ENCODE measurements at regions of chr1 and their contacts with region 1.

Region 1: DNA sequence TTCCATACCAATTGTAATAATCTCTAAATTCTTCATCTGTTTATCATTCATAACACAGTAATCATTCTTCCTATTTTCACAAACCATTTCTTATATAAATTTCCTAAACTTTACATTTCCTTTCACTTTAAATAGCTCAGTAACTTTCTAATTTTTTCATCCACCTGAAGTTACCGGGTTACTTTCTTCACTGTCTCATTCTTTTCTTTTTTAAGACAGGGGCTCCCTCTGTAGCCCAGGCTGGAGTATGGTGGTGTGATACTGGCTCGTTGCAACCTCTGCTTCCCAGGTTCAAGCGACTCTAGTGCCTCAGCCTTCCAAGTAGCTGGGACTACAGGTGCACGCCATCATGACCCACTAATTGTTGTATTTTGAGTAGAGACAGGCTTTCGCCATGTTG is 41.3 kb downstream of the RERE start:
- DNase-seq: no peak
- H3K4me3 ChIP-seq: no peak overlapping the region
- H3K27me3 ChIP-seq: no peaks in the 10 kb centered on the region
- CTCF ChIP-seq: no peak

Region 2: DNA sequence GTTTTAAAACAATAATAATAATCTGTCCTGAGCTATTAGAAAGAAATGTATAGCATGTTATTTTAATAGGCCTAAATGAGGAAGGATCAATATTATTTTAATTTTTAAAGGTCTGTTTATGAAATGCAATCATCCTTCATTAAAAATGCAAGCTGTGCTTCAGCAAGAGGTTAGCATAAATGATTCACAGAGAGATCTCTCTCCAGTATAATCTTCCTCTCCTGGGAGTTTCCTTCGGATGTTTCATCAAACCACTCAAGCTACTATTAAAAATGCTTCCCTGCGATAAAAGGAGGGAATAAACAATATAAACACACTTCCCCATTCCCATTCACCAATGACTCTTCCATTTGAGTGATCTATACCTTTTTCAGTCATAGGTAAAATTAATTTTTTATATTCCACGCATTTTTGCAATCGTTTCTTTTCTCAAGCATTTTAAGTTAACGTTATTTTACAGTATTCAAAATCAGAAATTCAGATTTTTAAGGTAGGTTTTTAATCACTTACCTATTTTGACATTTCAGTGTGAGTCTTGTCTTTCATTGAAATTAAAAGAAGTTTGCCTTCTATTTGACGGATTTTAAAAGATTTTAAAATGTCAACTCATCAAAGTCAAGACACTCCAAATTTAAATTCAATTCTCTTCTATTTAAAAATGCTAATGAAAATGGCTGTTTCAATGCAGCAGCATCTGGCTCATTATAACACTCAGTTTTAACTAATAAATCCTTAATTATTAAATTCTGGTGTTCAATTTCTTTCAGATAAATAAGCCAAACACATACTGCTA is 23.0 kb before region 1 on chr1:
- CTCF ChIA-PET with region 1: interaction called, 4 read pairs
- POLR2A ChIA-PET with region 1: interaction called, 20 read pairs
- DNase-seq: no peak
- H3K4me3 ChIP-seq: no peak overlapping the region
- H3K27me3 ChIP-seq: no peaks in the 10 kb centered on the region
- CTCF ChIP-seq: no peak